IMR-90 (cell line): ENCODE measurements at regions of chr16 and their contacts with region 1.

Region 1: DNA sequence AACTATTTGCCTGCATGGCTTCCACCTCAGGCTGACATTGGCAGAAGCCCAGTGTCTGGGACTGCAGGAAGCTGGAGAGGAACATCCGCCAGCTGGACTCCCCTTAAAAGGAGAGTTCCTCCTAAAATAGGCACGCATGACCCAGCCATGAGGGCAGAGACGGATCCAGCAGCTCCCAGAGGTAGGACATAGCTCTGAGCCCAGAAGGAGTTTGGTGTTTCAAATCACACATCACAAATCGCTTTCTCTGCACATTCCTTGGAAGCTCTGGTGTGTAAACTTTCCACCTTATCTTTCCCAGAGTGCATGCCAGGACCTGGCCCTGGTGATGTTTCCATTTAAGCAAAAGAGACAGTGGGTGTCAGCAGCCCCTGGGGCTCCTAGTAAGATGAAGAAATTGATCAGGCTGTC is 231.1 kb upstream of the CDH5 start:
- DNase-seq: peak; percentile 25
- ATAC-seq: no peak
- H3K4me3 ChIP-seq: no peak overlapping the region
- H3K27ac ChIP-seq: peak overlapping the region; percentile 58; the same call in 1 of the 2 replicates
- H3K4me1 ChIP-seq: peaks cover 44% of the 10 kb centered on the region
- H3K27me3 ChIP-seq: no peaks in the 10 kb centered on the region
- CTCF ChIP-seq: no peak
- POLR2A ChIP-seq: no peak
- RAD21 ChIP-seq: no peak

Region 2: DNA sequence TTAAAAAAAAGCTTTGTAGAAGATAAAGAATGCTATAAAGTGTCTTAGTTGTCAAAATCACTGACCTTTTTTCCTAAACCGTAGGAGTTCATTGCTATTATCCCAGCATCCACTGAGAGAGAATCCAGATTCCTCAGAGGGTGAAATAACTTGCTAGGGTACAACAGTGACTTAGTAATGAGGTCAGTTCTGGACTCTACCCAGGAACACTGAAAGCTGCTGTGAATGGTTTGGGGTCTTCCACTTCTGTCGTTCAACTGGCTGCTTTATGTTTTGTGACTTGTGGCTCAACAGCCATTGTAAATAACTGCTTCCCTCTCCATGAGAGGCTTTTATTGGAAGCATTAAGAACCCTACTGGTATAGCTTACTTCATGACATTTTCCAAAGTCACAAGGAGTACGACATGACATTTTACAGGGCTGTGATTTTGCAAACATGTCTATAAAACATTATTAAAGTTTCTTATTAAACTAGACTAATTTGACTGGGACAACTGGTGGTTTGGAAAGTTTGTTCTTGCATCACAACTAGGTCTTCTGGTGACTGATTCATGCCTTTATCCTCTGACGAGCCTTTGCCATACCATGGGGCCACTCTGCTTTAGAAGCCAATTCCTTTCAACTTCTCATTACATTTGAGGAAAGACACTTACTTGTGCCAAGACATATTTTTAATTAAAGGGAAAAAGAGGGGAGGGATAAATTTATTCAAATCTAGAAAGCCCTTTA is 921.4 kb before region 1 on chr16:
- CTCF ChIA-PET with region 1: no interaction called
- POLR2A ChIA-PET with region 1: no interaction called
- dilution Hi-C with region 1: no loop called
- in situ Hi-C with region 1: no loop called
- intact Hi-C with region 1: no loop called
- DNase-seq: peak; percentile 17
- ATAC-seq: no peak
- H3K4me3 ChIP-seq: no peak overlapping the region
- H3K27ac ChIP-seq: no peak overlapping the region
- H3K4me1 ChIP-seq: no peaks in the 10 kb centered on the region
- H3K27me3 ChIP-seq: no peaks in the 10 kb centered on the region; the same call in 1 of the 2 replicates
- CTCF ChIP-seq: no peak
- POLR2A ChIP-seq: no peak
- RAD21 ChIP-seq: no peak

Region 3: GRCh38 chr16:65572156-65572555 is 563.3 kb before region 1 on chr16:
- CTCF ChIA-PET with region 1: no interaction called
- POLR2A ChIA-PET with region 1: no interaction called
- dilution Hi-C with region 1: no loop called
- in situ Hi-C with region 1: no loop called
- intact Hi-C with region 1: loop called (anchors 10 kb)
- DNase-seq: peak; percentile 88
- ATAC-seq: peak; percentile 98
- H3K4me3 ChIP-seq: no peak overlapping the region
- H3K27ac ChIP-seq: peak overlapping the region; percentile 80; the same call in 1 of the 2 replicates
- H3K4me1 ChIP-seq: peaks cover 3% of the 10 kb centered on the region; the same call in 1 of the 2 replicates
- H3K27me3 ChIP-seq: no peaks in the 10 kb centered on the region
- CTCF ChIP-seq: 0 out of 2 replicates have a peak, but pooled peaks have one; percentile 20
- POLR2A ChIP-seq: no peak
- RAD21 ChIP-seq: peak; percentile 37; the same call in 1 of the 2 replicates

Region 4: DNA sequence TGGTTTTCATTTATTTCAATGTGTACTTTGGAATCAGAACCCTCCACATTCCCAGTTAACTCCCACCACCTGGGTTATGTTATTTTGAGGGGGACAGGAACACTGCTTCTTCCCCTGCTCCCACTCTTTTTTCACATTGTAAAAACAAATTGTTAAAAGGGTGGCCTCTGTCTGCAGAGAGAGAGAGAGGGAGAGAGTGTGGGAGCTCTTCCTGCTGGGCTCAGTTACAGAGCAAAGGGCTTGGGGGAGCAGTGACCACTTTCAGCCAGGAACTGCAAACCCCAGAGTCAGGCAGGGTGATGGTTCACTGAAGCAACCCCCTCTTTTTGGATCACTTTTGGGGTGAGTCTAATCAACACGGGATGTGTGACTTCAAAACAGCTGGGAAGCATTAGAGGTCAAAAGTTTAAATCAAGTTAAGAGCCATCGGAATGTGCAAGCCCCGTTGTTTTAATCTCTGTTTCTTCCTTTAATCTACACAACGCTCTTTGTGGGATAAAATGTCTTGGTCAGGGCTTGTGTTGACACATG is 436.6 kb before region 1 on chr16:
- CTCF ChIA-PET with region 1: no interaction called
- POLR2A ChIA-PET with region 1: no interaction called
- dilution Hi-C with region 1: no loop called
- in situ Hi-C with region 1: no loop called
- intact Hi-C with region 1: loop called (anchors 5 kb)
- DNase-seq: no peak
- ATAC-seq: peak; percentile 61
- H3K4me3 ChIP-seq: no peak overlapping the region
- H3K27ac ChIP-seq: peak overlapping the region; percentile 10; the same call in 1 of the 2 replicates
- H3K4me1 ChIP-seq: peaks cover 10% of the 10 kb centered on the region; the same call in 1 of the 2 replicates
- H3K27me3 ChIP-seq: no peaks in the 10 kb centered on the region
- CTCF ChIP-seq: no peak
- POLR2A ChIP-seq: no peak
- RAD21 ChIP-seq: no peak

Region 5: GRCh38 chr16:66189951-66190350 is 54.5 kb after region 1 on chr16:
- CTCF ChIA-PET with region 1: no interaction called
- POLR2A ChIA-PET with region 1: interaction called, 3 read pairs
- dilution Hi-C with region 1: no loop called
- in situ Hi-C with region 1: no loop called
- intact Hi-C with region 1: loop called (anchors 1 kb)
- DNase-seq: peak; percentile 92
- ATAC-seq: peak; percentile 73
- H3K4me3 ChIP-seq: no peak overlapping the region
- H3K27ac ChIP-seq: no peak overlapping the region
- H3K4me1 ChIP-seq: peaks cover 17% of the 10 kb centered on the region
- H3K27me3 ChIP-seq: peaks cover 3% of the 10 kb centered on the region; the same call in 1 of the 2 replicates
- CTCF ChIP-seq: no peak
- POLR2A ChIP-seq: no peak
- RAD21 ChIP-seq: no peak